ENCODE measurements at regions of chr9 and their contacts with region 1.

Region 1: DNA sequence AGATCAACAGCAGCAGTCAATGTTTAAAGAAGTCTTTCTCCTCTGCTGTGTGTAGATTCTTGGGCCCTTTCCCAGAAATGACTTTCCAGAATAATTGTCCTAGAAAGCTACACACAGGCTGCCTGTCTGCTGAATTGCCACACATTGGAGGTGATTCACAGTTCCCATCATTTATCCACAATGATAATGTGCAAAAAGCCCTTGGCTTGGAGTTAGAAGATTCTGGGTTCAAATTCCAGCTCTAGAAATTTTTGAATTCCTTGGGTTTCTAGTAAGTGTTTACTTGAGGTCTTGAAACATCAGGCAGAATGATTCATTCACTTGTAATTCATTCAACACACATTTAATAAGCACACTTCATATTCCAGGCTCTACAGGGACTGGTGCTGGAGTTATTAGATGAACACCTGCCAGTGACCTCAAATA is 28.6 kb upstream of the EPB41L4B start:
- DNase-seq: peak; percentile 90
- H3K4me3 Mint-ChIP-seq: no peak overlapping the region
- H3K27ac Mint-ChIP-seq: no peak overlapping the region
- H3K4me1 Mint-ChIP-seq: peaks cover 16% of the 10 kb centered on the region
- H3K27me3 Mint-ChIP-seq: no peaks in the 10 kb centered on the region
- CTCF ChIP-seq: no peak

Region 2: GRCh38 chr9:109328978-109329637 is 20.3 kb before region 1 on chr9:
- CTCF ChIA-PET with region 1: interaction called, 39 read pairs
- POLR2A ChIA-PET with region 1: interaction called, 10 read pairs
- intact Hi-C with region 1: loop called (anchors 1 kb)
- DNase-seq: peak; percentile 90
- H3K4me3 Mint-ChIP-seq: peak overlapping the region; percentile 52
- H3K27ac Mint-ChIP-seq: peak overlapping the region; percentile 92
- H3K4me1 Mint-ChIP-seq: peaks cover 66% of the 10 kb centered on the region
- H3K27me3 Mint-ChIP-seq: no peaks in the 10 kb centered on the region
- CTCF ChIP-seq: no peak

Region 3: DNA sequence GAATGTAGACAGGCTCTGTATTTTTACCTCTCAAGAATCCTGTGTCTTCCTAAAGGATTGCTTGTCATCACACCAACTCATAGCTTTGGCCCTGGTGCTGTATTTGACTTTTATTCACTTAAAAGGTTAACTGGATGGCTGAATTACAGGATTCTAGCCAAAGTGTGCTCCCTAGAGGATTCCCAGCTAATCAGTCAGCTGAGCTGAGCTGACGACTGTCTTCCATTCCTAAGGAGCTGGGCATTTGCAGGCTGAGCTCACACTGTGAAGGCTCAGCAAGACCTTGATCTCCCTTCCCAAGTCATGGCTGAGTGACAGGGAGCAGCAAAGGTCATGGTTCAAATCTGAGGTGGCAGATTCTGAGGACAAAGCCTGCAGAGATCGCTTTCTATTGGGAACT is 371.6 kb after region 1 on chr9:
- CTCF ChIA-PET with region 1: no interaction called
- POLR2A ChIA-PET with region 1: no interaction called
- intact Hi-C with region 1: no loop called
- DNase-seq: no peak
- H3K4me3 Mint-ChIP-seq: no peak overlapping the region
- H3K27ac Mint-ChIP-seq: no peak overlapping the region
- H3K4me1 Mint-ChIP-seq: no peaks in the 10 kb centered on the region
- H3K27me3 Mint-ChIP-seq: no peaks in the 10 kb centered on the region
- CTCF ChIP-seq: no peak